ENCODE measurements at regions of chr16 and their contacts with region 1.

Region 1: GRCh38 chr16:27867122-27868110 is 196.1 kb downstream of the GSG1L start:
- DNase-seq: peak; percentile 78
- H3K4me3 ChIP-seq: no peak overlapping the region
- H3K27ac ChIP-seq: no peak overlapping the region
- H3K4me1 ChIP-seq: no peaks in the 10 kb centered on the region
- H3K27me3 ChIP-seq: no peaks in the 10 kb centered on the region
- CTCF ChIP-seq: peak; percentile 54 to 84
- POLR2A ChIP-seq: no peak

Region 2: GRCh38 chr16:26345966-26346365 is 1521.5 kb before region 1 on chr16:
- CTCF ChIA-PET with region 1: no interaction called
- POLR2A ChIA-PET with region 1: no interaction called
- dilution Hi-C with region 1: no loop called
- intact Hi-C with region 1: no loop called
- DNase-seq: no peak
- H3K4me3 ChIP-seq: no peak overlapping the region
- H3K27ac ChIP-seq: no peak overlapping the region
- H3K4me1 ChIP-seq: no peaks in the 10 kb centered on the region
- H3K27me3 ChIP-seq: no peaks in the 10 kb centered on the region
- CTCF ChIP-seq: no peak
- POLR2A ChIP-seq: no peak

Region 3: DNA sequence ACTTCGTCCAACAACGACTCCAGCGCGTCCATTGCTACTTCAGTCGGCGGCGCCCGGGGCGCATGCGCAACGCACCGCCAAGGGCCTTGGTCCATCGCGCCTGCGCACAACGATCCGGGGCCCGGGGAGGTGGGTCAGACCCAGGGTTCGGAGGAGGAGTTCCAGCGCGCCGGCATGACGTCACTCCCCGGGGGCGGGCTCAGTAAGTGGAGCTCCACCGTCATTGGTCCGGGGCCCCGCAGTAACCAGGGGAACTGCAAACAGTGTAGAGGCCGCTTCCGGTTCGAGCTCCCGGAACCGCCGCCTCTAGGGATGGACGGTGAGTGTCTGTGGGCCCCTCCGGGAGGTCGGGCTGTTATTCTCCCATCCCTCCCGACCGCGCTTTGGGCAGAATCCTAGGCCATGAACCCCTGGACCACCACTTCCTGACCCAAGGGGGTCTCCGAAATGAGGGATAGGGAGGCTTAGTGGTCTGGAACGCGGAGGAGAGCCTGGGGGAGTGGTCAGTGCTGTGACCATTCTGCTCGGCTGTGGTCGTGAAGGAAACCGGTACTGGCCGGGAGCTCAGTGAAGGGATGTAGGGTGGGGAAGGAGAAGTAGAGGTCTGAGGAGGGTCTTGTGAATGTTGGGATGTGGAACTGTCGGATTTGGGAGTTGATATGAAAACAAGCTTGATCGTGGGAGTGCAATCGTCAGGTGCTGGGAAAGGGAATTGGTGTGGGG is 317.4 kb before region 1 on chr16 and contains the starts of genes GTF3C1 and KATNIP:
- CTCF ChIA-PET with region 1: no interaction called
- POLR2A ChIA-PET with region 1: no interaction called
- dilution Hi-C with region 1: no loop called
- intact Hi-C with region 1: loop called (anchors 1 kb)
- DNase-seq: peak; percentile 99
- H3K4me3 ChIP-seq: peak within 1 kb of the TSS; percentile 75 to 89 (median 89)
- H3K27ac ChIP-seq: peak within 1 kb of the TSS; percentile 93
- H3K4me1 ChIP-seq: peaks cover 14% of the 10 kb centered on the region
- H3K27me3 ChIP-seq: no peaks in the 10 kb centered on the region
- CTCF ChIP-seq: no peak
- POLR2A ChIP-seq: peak; percentile 86
- total RNA-seq, gene GTF3C1: 79.3 and 86.1 TPM in 2 replicates
- total RNA-seq, gene KATNIP: 26.8 and 30.7 TPM in 2 replicates

Region 4: DNA sequence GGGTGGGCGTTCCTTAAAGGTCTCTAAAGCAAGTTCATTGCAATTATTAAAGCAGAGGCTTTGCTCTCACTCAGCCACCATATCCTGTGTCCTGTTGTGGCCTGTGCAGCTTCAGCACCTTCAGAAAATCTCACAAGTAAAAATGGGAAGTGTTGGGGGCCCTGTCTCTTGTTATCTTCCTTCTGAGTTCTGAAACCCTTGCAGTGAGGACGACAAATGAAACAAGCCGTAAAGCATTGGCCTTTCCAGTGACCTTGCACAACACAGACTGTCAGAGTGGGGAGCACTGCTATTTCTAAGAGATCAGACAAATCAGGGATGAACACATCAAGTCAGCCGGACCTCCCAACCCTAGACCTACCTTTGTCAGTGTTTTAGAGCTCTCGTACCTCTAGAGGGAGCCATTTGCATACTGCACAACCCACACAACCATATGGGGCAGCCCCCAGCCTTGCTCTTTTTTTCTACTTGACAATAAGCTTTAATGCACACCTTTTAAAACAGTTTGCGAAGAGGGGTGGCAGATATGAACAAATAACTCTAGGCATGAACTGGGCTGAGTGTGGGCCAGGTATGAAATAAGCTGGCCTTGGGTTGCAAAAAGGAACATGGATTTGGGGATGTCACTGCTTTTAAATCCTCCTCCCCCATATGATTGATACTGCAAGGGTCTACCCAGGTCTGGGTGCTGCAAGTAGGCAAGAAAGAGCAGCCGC is 227.7 kb before region 1 on chr16:
- CTCF ChIA-PET with region 1: interaction called, 62 read pairs
- POLR2A ChIA-PET with region 1: no interaction called
- dilution Hi-C with region 1: no loop called
- intact Hi-C with region 1: loop called (anchors 1 kb)
- DNase-seq: peak; percentile 64
- H3K4me3 ChIP-seq: no peak overlapping the region
- H3K27ac ChIP-seq: no peak overlapping the region
- H3K4me1 ChIP-seq: no peaks in the 10 kb centered on the region
- H3K27me3 ChIP-seq: no peaks in the 10 kb centered on the region
- CTCF ChIP-seq: peak; percentile 69 to 81
- POLR2A ChIP-seq: no peak

Region 5: DNA sequence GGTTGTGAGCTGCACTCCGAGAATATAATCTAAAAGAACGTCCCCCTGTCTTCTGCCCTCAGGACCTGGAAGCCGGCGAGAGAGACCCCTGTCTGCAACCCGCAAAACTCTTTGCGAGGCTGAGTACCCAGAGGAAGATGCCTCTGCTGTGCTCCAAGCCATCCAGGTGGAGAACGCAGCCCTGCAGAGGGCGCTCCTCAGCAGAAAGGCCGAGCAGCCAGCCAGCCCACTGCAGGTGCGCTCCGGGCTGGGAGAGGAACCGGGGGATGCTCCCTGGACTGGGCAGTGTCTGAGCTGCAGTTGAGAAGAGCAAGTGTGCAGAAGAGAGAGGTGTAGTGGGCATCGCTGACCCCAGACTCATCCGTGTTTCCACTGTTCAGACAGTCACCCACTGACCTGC is 169.2 kb before region 1 on chr16:
- CTCF ChIA-PET with region 1: interaction called, 11 read pairs
- POLR2A ChIA-PET with region 1: no interaction called
- dilution Hi-C with region 1: no loop called
- intact Hi-C with region 1: loop called (anchors 2 kb)
- DNase-seq: no peak
- H3K4me3 ChIP-seq: no peak overlapping the region
- H3K27ac ChIP-seq: no peak overlapping the region
- H3K4me1 ChIP-seq: peaks cover 12% of the 10 kb centered on the region
- H3K27me3 ChIP-seq: no peaks in the 10 kb centered on the region
- CTCF ChIP-seq: peak; percentile 31 to 62
- POLR2A ChIP-seq: no peak

Region 6: GRCh38 chr16:27779641-27780164 is 87.7 kb before region 1 on chr16:
- CTCF ChIA-PET with region 1: interaction called, 12 read pairs
- POLR2A ChIA-PET with region 1: no interaction called
- dilution Hi-C with region 1: no loop called
- intact Hi-C with region 1: no loop called
- DNase-seq: no peak
- H3K4me3 ChIP-seq: no peak overlapping the region
- H3K27ac ChIP-seq: no peak overlapping the region
- H3K4me1 ChIP-seq: no peaks in the 10 kb centered on the region
- H3K27me3 ChIP-seq: no peaks in the 10 kb centered on the region
- CTCF ChIP-seq: no peak
- POLR2A ChIP-seq: no peak

Region 7: GRCh38 chr16:28258567-28258966 is 391.2 kb after region 1 on chr16:
- CTCF ChIA-PET with region 1: no interaction called
- POLR2A ChIA-PET with region 1: no interaction called
- dilution Hi-C with region 1: no loop called
- intact Hi-C with region 1: no loop called
- DNase-seq: no peak
- H3K4me3 ChIP-seq: no peak overlapping the region
- H3K27ac ChIP-seq: no peak overlapping the region
- H3K4me1 ChIP-seq: no peaks in the 10 kb centered on the region
- H3K27me3 ChIP-seq: peaks cover 2 to 3% of the 10 kb centered on the region in 2 experiments
- CTCF ChIP-seq: no peak
- POLR2A ChIP-seq: no peak